Activated T-helper 1 cell treated with anti-CD3 and anti-CD28 coated beads, Interleukin-12 subunit alpha, Interleukin-12 subunit beta, Interleukin-2, Interleukin-4 antibody, amounts not matched to agents 30 ng/mL and 10 ng/mL and 1 ng/mL, durations not matched to agents 14 hours and 24 hours and 36 hours (primary cell): ENCODE measurements at regions of chr6 and their contacts with region 1.

Region 1: GRCh38 chr6:106097411-106098231 is 11.5 kb downstream of the PRDM1 start:
- DNase-seq: peak; percentile 72
- H3K4me3 Mint-ChIP-seq: peak overlapping the region; percentile 89
- H3K27ac Mint-ChIP-seq: peak overlapping the region; percentile 96
- H3K4me1 Mint-ChIP-seq: peaks cover 91% of the 10 kb centered on the region
- H3K27me3 Mint-ChIP-seq: no peaks in the 10 kb centered on the region

Region 2: DNA sequence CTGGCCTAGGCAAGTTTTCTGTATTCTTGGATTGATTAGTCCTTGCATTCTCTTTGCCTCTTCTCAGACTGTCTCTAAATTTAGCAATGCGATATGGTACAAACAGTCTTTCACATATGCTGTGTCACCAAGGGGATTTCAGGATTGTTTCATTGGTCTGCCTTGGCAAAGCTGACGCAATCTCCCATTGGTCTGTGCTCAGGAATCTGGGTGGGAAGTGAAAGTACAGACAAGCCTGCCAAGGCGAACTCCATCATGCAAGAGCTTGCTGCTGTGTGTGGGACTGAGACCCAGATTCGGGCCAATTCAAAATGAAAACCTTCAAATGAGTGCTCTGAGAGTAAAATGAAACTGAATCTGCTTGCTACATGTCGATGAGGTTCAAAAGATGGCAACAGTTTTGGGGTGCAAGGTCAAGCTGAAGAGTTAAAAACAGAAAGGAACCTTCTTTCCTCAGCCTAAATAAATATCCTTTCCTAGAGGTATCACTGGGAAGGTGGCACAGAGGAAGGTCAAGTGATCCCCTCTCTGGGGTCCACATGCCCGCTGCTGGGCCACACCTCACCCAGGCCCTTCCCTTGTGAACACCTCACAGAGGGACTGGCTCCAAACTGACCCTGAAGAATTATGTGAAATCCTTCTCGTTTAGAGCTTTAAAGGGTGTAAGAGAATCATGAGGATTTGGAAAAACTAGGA is 495.9 kb before region 1 on chr6:
- intact Hi-C with region 1: loop called (anchors 2 kb)
- DNase-seq: peak; percentile 41
- H3K4me3 Mint-ChIP-seq: peak overlapping the region; percentile 64
- H3K27ac Mint-ChIP-seq: peak overlapping the region; percentile 89
- H3K4me1 Mint-ChIP-seq: peaks cover 37% of the 10 kb centered on the region
- H3K27me3 Mint-ChIP-seq: peaks cover 2% of the 10 kb centered on the region

Region 3: DNA sequence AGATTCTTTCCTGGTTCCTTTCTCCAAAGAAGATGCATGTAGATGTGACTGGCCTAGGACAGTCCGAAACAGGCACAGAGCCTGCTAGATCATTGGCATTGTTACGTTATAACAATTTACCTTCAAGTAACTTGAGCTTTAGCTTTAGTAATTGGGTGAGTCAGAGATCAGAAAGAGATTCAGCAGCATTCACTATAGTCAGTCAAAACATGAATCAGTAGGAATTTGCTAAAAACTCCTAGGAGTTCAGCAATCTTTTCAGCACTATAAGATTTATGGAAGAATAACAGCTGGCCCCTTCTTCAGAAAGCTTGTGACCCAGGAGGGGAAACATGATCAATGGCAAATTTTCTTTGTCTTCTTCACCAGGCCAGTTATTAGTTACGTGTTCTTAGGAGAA is 293.2 kb before region 1 on chr6:
- intact Hi-C with region 1: no loop called
- DNase-seq: no peak
- H3K4me3 Mint-ChIP-seq: no peak overlapping the region
- H3K27ac Mint-ChIP-seq: no peak overlapping the region
- H3K4me1 Mint-ChIP-seq: peaks cover 46% of the 10 kb centered on the region
- H3K27me3 Mint-ChIP-seq: no peaks in the 10 kb centered on the region

Region 4: DNA sequence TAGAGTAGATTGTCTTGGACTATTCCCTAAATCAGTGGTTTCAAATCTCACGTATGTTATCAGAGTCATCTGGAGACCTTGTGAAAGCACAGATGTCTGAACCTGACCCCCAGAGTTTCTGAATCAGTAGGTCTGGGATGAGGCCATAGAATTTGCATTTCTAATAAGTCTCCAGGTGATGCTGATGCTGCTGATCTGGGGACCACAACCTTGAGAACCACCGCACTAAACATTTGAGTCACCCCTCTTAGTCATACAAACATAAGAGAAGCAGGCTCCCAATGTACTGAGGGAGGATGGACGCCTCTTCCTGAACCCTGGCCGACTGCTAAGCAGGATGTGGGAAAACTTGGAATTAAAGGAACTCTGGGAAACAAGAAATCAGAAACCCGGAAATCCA is 199.3 kb before region 1 on chr6:
- intact Hi-C with region 1: loop called (anchors 1 kb)
- DNase-seq: no peak
- H3K4me3 Mint-ChIP-seq: no peak overlapping the region
- H3K27ac Mint-ChIP-seq: no peak overlapping the region
- H3K4me1 Mint-ChIP-seq: peaks cover 34% of the 10 kb centered on the region
- H3K27me3 Mint-ChIP-seq: no peaks in the 10 kb centered on the region

Region 5: DNA sequence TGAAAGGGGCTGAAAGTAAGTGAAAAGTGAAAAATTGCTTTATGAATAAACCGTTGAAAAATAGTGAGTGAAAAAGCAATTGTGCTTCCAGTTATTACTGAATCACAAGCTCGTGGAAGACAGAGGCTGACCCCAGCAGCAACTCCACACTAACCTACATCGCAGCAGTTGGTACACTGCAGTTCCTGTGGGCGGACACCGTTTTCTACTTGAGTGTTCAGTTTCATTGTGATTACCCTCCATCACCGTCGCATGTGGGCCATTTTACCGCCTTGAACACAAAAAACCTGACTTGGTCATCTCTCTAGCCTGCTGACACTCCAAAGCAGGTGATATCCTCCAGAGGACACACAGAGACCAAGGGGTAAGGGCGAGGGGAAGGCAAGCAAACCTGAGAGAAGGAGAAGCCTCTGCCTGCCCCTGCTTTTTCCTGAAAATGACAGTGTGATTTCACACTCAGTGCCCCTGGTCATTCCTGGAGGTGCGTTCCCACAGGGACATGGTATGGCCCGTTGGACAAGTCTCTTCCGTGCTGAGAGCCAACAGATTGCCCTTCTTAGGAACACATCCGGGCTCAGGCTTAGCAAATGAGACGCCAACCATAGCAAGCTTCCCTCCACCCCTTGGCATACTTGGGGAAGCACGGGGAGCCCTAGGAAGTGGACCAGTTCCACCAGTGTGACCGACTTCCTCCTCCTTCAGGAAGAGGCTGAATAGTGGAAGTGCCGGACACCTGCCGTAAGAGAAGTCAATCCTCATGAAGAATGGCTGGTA is 17.1 kb after region 1 on chr6:
- intact Hi-C with region 1: loop called (anchors 1 kb)
- DNase-seq: peak; percentile 47
- H3K4me3 Mint-ChIP-seq: peak overlapping the region; percentile 58
- H3K27ac Mint-ChIP-seq: peak overlapping the region; percentile 82
- H3K4me1 Mint-ChIP-seq: peaks cover 93% of the 10 kb centered on the region
- H3K27me3 Mint-ChIP-seq: peaks cover 2% of the 10 kb centered on the region

Region 6: GRCh38 chr6:106184629-106185028 is 87.0 kb after region 1 on chr6:
- intact Hi-C with region 1: loop called (anchors 1 kb)
- DNase-seq: no peak
- H3K4me3 Mint-ChIP-seq: no peak overlapping the region
- H3K27ac Mint-ChIP-seq: no peak overlapping the region
- H3K4me1 Mint-ChIP-seq: peaks cover 70% of the 10 kb centered on the region
- H3K27me3 Mint-ChIP-seq: no peaks in the 10 kb centered on the region

Region 7: DNA sequence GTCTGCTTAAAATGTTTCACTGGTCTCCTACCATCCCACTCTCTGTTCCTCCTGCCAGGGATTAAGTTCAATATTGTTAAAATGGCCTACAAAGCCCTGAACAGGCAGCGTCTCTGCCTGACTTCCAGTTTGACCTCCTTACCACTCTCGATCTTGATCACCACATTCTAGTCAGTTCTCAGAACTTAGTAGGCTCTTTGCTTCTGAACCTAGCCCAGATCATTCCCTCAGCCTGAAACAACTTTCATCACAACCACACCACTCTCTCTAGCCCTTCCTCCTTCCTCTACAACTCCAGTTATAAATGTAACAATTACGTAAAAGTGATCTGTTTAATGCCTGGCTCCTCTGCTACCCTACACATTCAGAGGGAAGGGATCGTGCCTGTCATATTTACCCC is 174.7 kb after region 1 on chr6:
- intact Hi-C with region 1: no loop called
- DNase-seq: no peak
- H3K4me3 Mint-ChIP-seq: no peak overlapping the region
- H3K27ac Mint-ChIP-seq: no peak overlapping the region
- H3K4me1 Mint-ChIP-seq: peaks cover 13% of the 10 kb centered on the region
- H3K27me3 Mint-ChIP-seq: no peaks in the 10 kb centered on the region

Region 8: GRCh38 chr6:106347341-106347740 is 249.7 kb after region 1 on chr6:
- intact Hi-C with region 1: no loop called
- DNase-seq: no peak
- H3K4me3 Mint-ChIP-seq: no peak overlapping the region
- H3K27ac Mint-ChIP-seq: no peak overlapping the region
- H3K4me1 Mint-ChIP-seq: no peaks in the 10 kb centered on the region
- H3K27me3 Mint-ChIP-seq: peaks cover 15% of the 10 kb centered on the region

Region 9: DNA sequence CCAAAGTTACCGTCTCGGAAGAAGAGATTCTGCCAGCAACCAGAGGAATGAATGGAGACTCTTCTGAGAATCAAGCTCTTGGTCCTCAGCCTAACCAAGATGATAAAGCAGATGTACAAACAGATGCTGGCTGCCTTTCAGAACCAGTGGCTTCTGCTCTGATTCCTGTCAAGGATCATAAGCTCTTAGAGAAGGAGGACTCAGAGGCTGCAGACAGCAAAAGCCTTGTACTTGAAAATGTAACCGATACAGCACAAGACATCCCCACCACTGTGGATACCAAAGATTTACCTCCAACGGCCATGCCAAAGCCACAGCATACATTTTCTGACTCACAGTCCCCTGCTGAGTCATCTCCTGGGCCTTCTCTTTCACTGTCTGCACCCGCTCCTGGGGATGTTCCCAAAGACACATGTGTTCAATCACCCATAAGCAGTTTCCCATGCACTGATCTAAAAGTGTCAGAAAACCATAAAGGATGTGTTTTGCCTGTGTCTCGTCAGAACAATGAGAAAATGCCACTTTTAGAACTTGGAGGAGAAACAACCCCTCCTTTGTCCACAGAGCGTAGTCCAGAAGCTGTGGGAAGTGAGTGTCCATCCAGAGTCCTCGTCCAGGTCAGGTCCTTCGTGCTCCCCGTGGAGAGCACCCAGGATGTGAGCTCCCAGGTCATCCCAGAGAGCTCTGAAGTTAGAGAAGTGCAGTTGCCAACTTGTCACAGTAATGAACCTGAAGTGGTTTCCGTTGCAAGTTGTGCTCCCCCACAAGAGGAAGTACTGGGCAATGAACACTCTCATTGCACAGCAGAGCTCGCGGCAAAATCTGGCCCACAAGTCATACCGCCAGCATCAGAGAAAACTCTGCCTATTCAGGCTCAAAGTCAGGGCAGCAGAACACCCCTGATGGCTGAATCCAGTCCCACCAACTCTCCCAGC is 422.1 kb after region 1 on chr6:
- intact Hi-C with region 1: loop called (anchors 1 kb)
- DNase-seq: peak; percentile 74
- H3K4me3 Mint-ChIP-seq: peak overlapping the region; percentile 90
- H3K27ac Mint-ChIP-seq: peak overlapping the region; percentile 98
- H3K4me1 Mint-ChIP-seq: peaks cover 79% of the 10 kb centered on the region
- H3K27me3 Mint-ChIP-seq: no peaks in the 10 kb centered on the region